BJ (cell line): ENCODE measurements at regions of chr14 and their contacts with region 1.

Region 1: GRCh38 chr14:70816525-70816924 is 7.2 kb upstream of the MAP3K9 start:
- DNase-seq: no peak
- H3K4me3 ChIP-seq: no peak overlapping the region
- H3K27me3 ChIP-seq: no peaks in the 10 kb centered on the region
- CTCF ChIP-seq: no peak

Region 2: DNA sequence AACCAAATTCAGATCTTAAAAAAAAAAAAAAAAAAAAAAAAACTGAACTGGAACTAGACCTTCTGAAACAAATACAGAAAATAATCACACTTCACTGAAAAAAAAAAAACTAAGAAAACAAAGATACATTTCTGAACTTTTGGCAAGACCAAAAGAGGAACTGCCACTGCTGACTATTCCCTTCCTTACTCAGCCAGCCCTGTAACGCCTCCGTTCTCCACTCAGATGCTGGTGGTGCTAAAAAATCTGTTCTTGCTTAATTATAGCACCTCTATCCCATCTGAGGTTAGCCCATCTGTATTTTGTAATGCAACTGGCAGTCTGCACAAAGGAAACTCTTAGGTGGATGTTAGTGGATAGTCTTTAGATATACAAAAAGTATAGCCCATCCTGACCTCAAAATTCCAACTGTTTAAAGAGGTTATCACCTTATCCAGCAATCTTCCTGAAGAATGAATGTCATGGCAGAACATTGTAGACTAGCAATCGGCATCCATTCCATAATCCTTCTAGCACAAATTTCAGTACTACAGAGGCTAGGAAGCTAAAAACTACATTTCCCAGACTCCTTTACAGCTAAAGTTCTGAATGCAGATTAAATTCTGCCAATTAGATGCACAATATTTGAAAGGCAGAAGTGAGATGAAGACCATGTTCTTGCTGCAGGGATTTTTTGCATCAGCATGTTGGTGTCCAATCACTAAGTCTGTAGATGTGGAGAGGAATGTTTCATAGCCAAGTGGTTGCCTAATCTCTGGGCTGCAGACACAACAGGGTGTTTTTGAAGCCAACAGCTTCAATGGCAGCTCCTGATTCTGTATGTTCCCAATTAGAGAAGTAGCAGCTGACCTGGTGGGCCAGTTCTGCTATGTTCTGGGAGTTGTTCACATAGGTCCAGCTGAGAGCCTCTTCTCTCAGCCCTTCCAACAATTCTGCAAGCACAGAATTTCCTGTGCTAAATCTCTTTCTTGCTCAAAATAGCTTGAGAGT is 12.9 kb before region 1 on chr14:
- CTCF ChIA-PET with region 1: interaction called, 10 read pairs
- POLR2A ChIA-PET with region 1: no interaction called
- DNase-seq: no peak
- H3K4me3 ChIP-seq: no peak overlapping the region
- H3K27me3 ChIP-seq: peaks cover 7% of the 10 kb centered on the region; the same call in 1 of the 2 replicates
- CTCF ChIP-seq: no peak

Region 3: GRCh38 chr14:70827396-70828151 is 11.0 kb after region 1 on chr14:
- CTCF ChIA-PET with region 1: interaction called, 19 read pairs
- POLR2A ChIA-PET with region 1: no interaction called
- DNase-seq: no peak
- H3K4me3 ChIP-seq: no peak overlapping the region
- H3K27me3 ChIP-seq: no peaks in the 10 kb centered on the region
- CTCF ChIP-seq: no peak

Region 4: DNA sequence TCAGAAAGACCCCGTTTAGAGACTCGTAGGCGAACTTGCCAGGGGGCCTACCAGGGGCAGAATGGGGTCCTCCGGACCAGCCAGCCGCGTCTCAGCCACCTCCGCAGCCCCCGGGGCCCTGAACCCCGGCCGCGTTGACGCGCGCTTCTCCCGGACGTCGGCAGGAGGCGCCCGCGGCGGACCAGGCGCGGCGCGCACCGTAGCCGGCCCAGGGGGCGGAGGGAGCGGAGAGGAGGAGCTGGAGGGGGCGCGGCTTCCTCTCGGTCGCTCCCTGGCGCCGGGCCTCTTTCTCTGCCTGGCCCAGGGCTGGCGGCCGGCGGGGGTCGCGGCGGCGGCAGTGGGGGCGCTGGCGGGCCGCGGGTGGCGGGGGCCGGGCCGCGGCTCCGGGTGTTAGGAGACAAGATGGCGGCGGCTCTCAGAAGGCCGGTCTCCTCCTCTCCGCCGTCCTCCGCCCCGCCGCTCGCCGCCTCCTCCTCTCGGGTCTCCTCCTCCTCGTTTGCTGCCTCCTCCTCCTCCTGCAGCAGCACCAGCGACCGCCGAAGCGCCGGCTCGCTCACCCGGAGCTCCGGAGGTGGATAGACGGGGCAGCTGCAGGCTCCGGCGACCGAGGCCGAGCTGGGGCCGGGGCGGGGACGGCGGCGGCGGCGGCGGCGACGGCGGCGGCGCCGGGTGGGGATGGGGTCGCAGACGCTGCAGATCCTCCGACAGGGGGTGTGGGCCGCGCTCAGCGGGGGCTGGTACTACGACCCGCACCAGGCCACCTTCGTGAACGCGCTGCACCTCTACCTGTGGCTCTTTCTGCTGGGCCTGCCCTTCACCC is 90.9 kb after region 1 on chr14 and contains the start of gene PCNX1:
- CTCF ChIA-PET with region 1: interaction called, 37 read pairs
- POLR2A ChIA-PET with region 1: no interaction called
- DNase-seq: no peak
- H3K4me3 ChIP-seq: peak within 1 kb of the TSS; percentile 91
- H3K27me3 ChIP-seq: no peaks in the 10 kb centered on the region
- CTCF ChIP-seq: peak; percentile 57
- polyA plus RNA-seq, gene PCNX1: 33.2 and 47.8 TPM in 2 replicates

Region 5: GRCh38 chr14:70955543-70956480 is 139.3 kb after region 1 on chr14:
- CTCF ChIA-PET with region 1: interaction called, 26 read pairs
- POLR2A ChIA-PET with region 1: no interaction called
- DNase-seq: no peak
- H3K4me3 ChIP-seq: no peak overlapping the region
- H3K27me3 ChIP-seq: no peaks in the 10 kb centered on the region
- CTCF ChIP-seq: peak; percentile 69